PC-9 (cell line): ENCODE measurements at regions of chr9 and their contacts with region 1.

Region 1: DNA sequence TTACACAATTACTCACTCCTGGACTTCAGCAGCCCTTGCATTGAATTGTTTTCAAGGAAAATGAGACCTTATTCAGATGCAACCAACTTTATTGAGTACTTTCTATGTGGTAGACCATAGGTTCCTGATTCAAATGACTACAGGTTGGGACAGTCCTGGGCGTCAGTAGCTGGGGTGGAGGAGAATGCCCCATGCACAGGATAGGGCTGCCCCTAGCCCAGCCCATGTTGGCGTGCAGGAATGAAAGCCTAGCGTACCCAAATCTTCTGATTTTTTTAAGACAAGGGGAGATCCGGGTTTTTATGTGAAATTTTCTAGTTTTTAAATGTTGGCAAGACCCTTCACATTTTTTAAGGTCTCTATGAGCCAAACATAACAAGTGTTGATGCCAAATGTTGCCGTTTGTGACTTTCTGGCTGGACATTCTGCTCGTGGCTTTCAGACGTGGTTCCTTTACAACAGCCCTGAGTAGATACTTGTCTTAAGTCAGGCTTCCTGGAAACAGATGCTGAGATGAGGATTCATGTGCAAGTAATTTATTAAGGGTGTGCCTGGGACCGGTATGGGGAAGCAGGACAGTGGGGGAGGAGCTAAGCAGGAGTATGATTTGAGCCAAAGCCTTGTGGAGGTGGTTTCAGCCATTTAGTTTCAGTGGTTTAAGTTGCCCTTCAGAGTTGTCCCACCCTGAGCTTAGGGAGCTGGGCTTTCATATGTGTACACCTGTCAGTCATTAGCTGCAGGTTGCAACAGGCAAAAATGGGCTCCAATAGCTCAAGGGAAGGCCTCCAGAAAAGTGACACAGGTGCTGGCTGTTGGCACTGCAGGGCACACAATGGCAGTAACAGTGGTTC is 154.1 kb downstream of the NTRK2 start:
- DNase-seq: peak in 1 of 2 experiments; percentile 35
- H3K4me3 ChIP-seq: no peak overlapping the region
- H3K27ac ChIP-seq: no peak overlapping the region
- H3K4me1 ChIP-seq: no peaks in the 10 kb centered on the region
- H3K27me3 ChIP-seq: peaks cover 20% of the 10 kb centered on the region
- CTCF ChIP-seq: no peak

Region 2: GRCh38 chr9:84811072-84811725 is 12.4 kb before region 1 on chr9:
- CTCF ChIA-PET with region 1: no interaction called
- POLR2A ChIA-PET with region 1: interaction called, 10 read pairs
- intact Hi-C with region 1: no loop called
- DNase-seq: no peak
- H3K4me3 ChIP-seq: no peak overlapping the region
- H3K27ac ChIP-seq: no peak overlapping the region
- H3K4me1 ChIP-seq: no peaks in the 10 kb centered on the region
- H3K27me3 ChIP-seq: peaks cover 19% of the 10 kb centered on the region; the same call in 1 of the 2 replicates
- CTCF ChIP-seq: no peak

Region 3: DNA sequence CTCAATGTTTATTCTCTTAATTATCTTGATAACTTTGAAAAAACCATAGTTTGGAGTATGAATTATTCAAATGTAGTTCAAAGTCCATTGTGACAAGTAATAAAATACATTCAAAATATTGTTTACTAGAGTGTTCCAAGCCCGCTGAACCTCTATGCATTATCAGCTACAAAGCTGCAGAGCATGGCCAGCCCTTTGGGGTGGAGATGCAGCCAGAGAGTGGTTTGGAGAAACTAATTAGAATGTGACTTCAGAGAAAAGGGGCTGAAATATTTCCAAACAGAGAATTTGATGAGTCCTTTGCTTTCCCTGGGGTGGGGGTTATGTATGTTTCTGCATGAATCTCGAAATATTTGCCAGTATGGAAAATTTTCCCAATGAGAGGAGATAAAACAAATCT is 57.2 kb after region 1 on chr9:
- CTCF ChIA-PET with region 1: no interaction called
- POLR2A ChIA-PET with region 1: no interaction called
- intact Hi-C with region 1: loop called (anchors 10 kb)
- DNase-seq: no peak
- H3K4me3 ChIP-seq: no peak overlapping the region
- H3K27ac ChIP-seq: no peak overlapping the region
- H3K4me1 ChIP-seq: no peaks in the 10 kb centered on the region
- H3K27me3 ChIP-seq: peaks cover 18% of the 10 kb centered on the region; the same call in 1 of the 2 replicates
- CTCF ChIP-seq: no peak

Region 4: GRCh38 chr9:84922051-84922450 is 98.4 kb after region 1 on chr9:
- CTCF ChIA-PET with region 1: no interaction called
- POLR2A ChIA-PET with region 1: no interaction called
- intact Hi-C with region 1: no loop called
- DNase-seq: no peak
- H3K4me3 ChIP-seq: no peak overlapping the region
- H3K27ac ChIP-seq: no peak overlapping the region
- H3K4me1 ChIP-seq: no peaks in the 10 kb centered on the region
- H3K27me3 ChIP-seq: peaks cover 15% of the 10 kb centered on the region
- CTCF ChIP-seq: no peak